Common myeloid progenitor, CD34-positive (primary cell): ENCODE measurements at regions of chr14 and their contacts with region 1.

Region 1: DNA sequence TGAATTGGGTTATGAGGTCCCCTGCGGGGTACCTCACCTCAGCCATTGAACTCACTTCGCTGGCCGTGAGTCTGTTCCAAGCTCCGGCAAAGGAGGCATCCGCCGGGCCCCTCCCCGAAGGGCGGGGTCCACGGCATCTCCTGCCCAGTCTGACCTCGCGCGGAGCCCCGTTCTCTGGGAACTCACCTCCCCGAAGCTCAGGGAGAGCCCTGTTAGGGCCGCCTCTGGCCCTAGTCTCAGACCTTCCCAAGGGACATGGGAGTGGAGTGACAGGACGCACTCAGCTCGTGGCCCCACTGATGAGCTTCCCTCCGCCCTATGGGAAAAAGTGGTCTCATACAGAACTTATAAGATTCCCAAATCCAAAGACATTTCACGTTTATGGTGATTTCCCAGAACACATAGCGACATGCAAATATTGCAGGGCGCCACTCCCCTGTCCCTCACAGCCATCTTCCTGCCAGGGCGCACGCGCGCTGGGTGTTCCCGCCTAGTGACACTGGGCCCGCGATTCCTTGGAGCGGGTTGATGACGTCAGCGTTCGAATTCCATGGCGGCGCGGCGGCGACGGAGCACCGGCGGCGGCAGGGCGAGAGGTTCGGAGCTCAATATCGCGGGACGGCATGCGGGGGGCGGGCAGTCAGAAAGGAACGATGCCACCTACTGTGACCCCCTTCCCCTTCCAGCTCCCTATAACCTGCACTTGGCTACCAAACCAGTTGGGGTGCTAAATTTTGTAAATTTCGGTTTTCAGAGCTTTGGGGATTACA is at the start of gene PARP2:
- DNase-seq: peak; percentile 99
- H3K4me3 ChIP-seq: peak within 1 kb of the TSS; percentile 41 to 99 (median 97)
- H3K27ac ChIP-seq: peak within 1 kb of the TSS; percentile 71 to 89
- H3K4me1 ChIP-seq: peaks cover 0 to 12% (median 3%) of the 10 kb centered on the region in 4 experiments
- H3K27me3 ChIP-seq: no peaks in the 10 kb centered on the region

Region 2: GRCh38 chr14:20327005-20327869 is 16.0 kb before region 1 on chr14:
- CTCF ChIA-PET with region 1: interaction called, 69 read pairs
- POLR2A ChIA-PET with region 1: interaction called, 21 read pairs
- DNase-seq: peak; percentile 73 to 77 (median 75)
- H3K4me3 ChIP-seq: no peak overlapping the region
- H3K27ac ChIP-seq: no peak overlapping the region
- H3K4me1 ChIP-seq: peaks cover under 1 to 15% (median 4%) of the 10 kb centered on the region in 4 experiments
- H3K27me3 ChIP-seq: no peaks in the 10 kb centered on the region

Region 3: GRCh38 chr14:20332788-20333493 is 10.3 kb before region 1 on chr14 and contains the start of gene CCNB1IP1:
- CTCF ChIA-PET with region 1: interaction called, 69 read pairs
- POLR2A ChIA-PET with region 1: interaction called, 21 read pairs
- DNase-seq: peak; percentile 72 to 83 (median 79)
- H3K4me3 ChIP-seq: peak within 1 kb of the TSS; percentile 39 to 100 (median 93)
- H3K27ac ChIP-seq: peak within 1 kb of the TSS; percentile 30 to 72
- H3K4me1 ChIP-seq: peaks cover 7 to 17% (median 11%) of the 10 kb centered on the region in 4 experiments
- H3K27me3 ChIP-seq: no peaks in the 10 kb centered on the region

Region 4: GRCh38 chr14:20365928-20366327 is 22.7 kb after region 1 on chr14:
- CTCF ChIA-PET with region 1: no interaction called
- POLR2A ChIA-PET with region 1: no interaction called
- DNase-seq: no peak
- H3K4me3 ChIP-seq: no peak overlapping the region
- H3K27ac ChIP-seq: no peak overlapping the region
- H3K4me1 ChIP-seq: no peaks in the 10 kb centered on the region
- H3K27me3 ChIP-seq: no peaks in the 10 kb centered on the region